MCF 10A (cell line): ENCODE measurements at regions of chr1 and their contacts with region 1.

Region 1: GRCh38 chr1:9145021-9145668 is 16.2 kb upstream of the GPR157 start:
- DNase-seq: peak; percentile 76
- H3K4me3 Mint-ChIP-seq: no peak overlapping the region
- H3K27ac Mint-ChIP-seq: no peak overlapping the region
- H3K4me1 Mint-ChIP-seq: peaks cover 10% of the 10 kb centered on the region
- H3K27me3 Mint-ChIP-seq: no peaks in the 10 kb centered on the region
- CTCF ChIP-seq: no peak

Region 2: DNA sequence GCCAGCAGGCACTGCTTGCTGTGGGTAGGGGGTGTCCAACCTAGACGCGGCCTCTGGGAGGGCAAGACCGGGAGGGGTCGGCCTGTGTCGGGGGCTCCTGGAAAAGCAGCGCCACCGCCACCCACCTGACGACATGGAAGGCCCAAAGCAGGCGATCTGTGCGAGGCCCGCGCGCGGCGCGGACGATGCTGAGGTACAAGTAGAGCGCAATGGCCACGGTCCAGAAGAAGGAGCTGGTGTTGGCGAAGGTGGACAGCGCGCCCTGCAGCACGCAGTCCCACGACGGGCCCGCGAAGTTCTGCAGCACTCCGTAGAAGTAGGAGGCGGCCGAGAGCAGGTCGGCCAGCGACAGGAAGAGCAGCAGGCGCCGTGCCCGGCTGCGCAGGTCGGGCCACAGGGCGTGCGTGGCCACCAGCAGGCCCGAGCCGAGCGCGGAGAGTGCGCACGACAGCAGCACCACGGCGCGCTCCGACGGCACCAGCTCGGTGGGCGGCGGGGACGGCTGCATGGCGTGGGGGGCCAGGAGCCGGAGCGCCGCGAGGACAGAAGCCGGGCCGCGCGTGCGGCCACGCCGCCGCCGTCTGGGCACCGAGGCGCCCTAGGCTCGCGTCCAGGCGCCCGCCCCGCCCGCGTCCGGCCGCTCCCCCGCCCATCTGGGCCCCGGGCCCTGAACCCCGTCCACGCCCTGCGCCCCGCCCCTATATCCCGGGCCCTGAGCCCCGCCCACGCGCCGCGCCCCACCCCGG is 16.5 kb before region 1 on chr1 and contains the start of gene GPR157:
- CTCF ChIA-PET with region 1: interaction called, 13 read pairs
- POLR2A ChIA-PET with region 1: interaction called, 4 read pairs
- intact Hi-C with region 1: no loop called
- DNase-seq: peak; percentile 87
- H3K4me3 Mint-ChIP-seq: peak within 1 kb of the TSS; percentile 89
- H3K27ac Mint-ChIP-seq: peak within 1 kb of the TSS; percentile 88
- H3K4me1 Mint-ChIP-seq: peaks cover 10% of the 10 kb centered on the region
- H3K27me3 Mint-ChIP-seq: no peaks in the 10 kb centered on the region
- CTCF ChIP-seq: no peak
- total RNA-seq, gene GPR157: 8.1 and 12.7 TPM in 2 replicates

Region 3: DNA sequence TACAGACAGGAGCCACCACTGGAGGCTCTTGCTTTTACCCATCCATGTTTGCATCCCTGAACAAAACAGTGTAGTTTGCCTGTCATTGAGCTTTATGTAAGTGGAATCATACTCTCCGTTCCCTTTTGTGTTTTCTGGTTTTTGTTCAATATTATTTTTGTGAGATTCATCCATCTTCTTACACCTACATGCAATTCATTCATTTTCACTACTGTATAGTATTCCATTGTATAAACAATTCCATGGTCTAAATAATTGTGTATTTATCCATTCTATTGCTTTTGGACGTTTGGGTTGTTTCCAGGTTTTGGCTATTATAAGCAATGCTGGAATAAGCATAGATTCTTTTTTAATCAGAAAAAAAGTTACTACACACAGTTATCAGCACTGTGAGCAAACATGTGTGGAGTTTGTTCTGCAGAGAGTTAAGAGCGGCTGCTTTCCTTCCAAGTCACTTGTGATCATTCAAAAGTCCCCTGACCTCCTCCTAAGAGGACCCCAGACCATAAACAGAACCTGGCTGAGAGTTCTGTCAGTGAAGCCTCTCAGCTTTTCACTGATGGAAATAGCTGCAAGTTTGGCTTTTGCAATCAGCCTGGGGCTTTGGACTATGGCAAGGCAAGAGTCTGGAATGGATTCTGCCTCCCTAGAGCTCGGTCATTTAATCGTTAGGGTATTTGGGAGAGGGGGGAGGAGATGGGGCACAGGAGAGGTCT is 11.1 kb before region 1 on chr1:
- CTCF ChIA-PET with region 1: interaction called, 13 read pairs
- POLR2A ChIA-PET with region 1: interaction called, 4 read pairs
- intact Hi-C with region 1: no loop called
- DNase-seq: no peak
- H3K4me3 Mint-ChIP-seq: no peak overlapping the region
- H3K27ac Mint-ChIP-seq: no peak overlapping the region
- H3K4me1 Mint-ChIP-seq: peaks cover 10% of the 10 kb centered on the region
- H3K27me3 Mint-ChIP-seq: no peaks in the 10 kb centered on the region
- CTCF ChIP-seq: no peak

Region 4: DNA sequence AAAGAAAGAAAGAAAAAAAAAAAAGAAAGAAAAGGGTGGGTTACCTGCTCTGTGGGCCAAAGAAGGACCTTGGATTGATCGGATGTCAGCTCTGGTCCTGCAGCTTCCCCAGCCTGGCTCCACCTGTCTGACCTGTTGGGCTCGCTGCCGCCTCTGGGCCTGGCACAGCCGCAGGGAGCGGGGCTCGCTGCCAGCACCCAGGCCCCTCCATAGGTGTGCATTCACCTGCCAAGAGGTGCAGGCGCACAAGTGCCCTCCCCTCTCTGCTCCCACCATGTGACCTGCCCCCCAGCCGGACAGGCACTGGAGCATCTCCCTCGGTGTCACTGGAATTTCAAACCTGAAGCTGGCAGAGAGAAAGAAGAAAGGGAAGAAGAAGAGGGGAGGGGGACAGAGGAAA is 16.8 kb after region 1 on chr1:
- CTCF ChIA-PET with region 1: interaction called, 11 read pairs
- POLR2A ChIA-PET with region 1: interaction called, 4 read pairs
- intact Hi-C with region 1: no loop called
- DNase-seq: no peak
- H3K4me3 Mint-ChIP-seq: no peak overlapping the region
- H3K27ac Mint-ChIP-seq: no peak overlapping the region
- H3K4me1 Mint-ChIP-seq: peaks cover 21% of the 10 kb centered on the region
- H3K27me3 Mint-ChIP-seq: no peaks in the 10 kb centered on the region
- CTCF ChIP-seq: no peak

Region 5: GRCh38 chr1:9181176-9181906 is 36.2 kb after region 1 on chr1:
- CTCF ChIA-PET with region 1: interaction called, 6 read pairs
- POLR2A ChIA-PET with region 1: no interaction called
- intact Hi-C with region 1: loop called (anchors 5 kb)
- DNase-seq: peak; percentile 75
- H3K4me3 Mint-ChIP-seq: peak overlapping the region; percentile 91
- H3K27ac Mint-ChIP-seq: peak overlapping the region; percentile 93
- H3K4me1 Mint-ChIP-seq: peaks cover 20% of the 10 kb centered on the region
- H3K27me3 Mint-ChIP-seq: no peaks in the 10 kb centered on the region
- CTCF ChIP-seq: peak; percentile 95

Region 6: GRCh38 chr1:9196129-9197040 is 51.2 kb after region 1 on chr1:
- CTCF ChIA-PET with region 1: interaction called, 10 read pairs
- POLR2A ChIA-PET with region 1: interaction called, 3 read pairs
- intact Hi-C with region 1: loop called (anchors 1 kb)
- DNase-seq: peak; percentile 76
- H3K4me3 Mint-ChIP-seq: no peak overlapping the region
- H3K27ac Mint-ChIP-seq: peak overlapping the region; percentile 54
- H3K4me1 Mint-ChIP-seq: peaks cover 46% of the 10 kb centered on the region
- H3K27me3 Mint-ChIP-seq: no peaks in the 10 kb centered on the region
- CTCF ChIP-seq: peak; percentile 79

Region 7: DNA sequence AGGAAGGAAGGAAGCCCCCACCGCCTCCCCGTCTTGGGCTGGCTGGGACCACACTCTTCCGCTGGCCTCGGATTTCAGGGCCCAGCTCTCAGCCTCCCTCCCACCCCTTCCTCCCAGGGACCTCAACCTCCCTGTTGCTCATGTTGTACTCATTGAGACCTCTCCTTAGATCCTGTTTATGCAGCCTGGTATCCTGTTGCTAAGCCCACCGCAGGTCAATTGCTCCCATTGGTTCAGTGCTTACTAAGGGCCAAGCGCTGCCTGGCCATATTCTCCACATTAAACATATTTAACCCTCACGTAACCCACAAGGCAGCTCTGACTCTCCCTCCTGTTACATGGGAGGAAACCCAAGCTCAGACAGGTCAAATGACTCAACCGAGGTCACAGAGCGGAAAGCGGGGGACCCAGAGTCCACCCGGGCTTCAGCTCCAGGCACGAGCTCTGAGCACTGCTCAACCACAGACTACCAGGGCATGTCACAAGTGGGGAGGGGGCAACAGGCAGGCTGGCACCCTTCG is 66.2 kb after region 1 on chr1:
- CTCF ChIA-PET with region 1: no interaction called
- POLR2A ChIA-PET with region 1: no interaction called
- intact Hi-C with region 1: no loop called
- DNase-seq: no peak
- H3K4me3 Mint-ChIP-seq: no peak overlapping the region
- H3K27ac Mint-ChIP-seq: no peak overlapping the region
- H3K4me1 Mint-ChIP-seq: no peaks in the 10 kb centered on the region
- H3K27me3 Mint-ChIP-seq: no peaks in the 10 kb centered on the region
- CTCF ChIP-seq: no peak